Calu3 (cell line): ENCODE measurements at regions of chr1 and their contacts with region 1.

Region 1: GRCh38 chr1:162213281-162213912 is 143.9 kb downstream of the NOS1AP start:
- DNase-seq: peak; percentile 76
- H3K4me3 Mint-ChIP-seq: no peak overlapping the region
- H3K27ac Mint-ChIP-seq: no peak overlapping the region
- H3K4me1 Mint-ChIP-seq: peaks cover 52% of the 10 kb centered on the region
- H3K27me3 Mint-ChIP-seq: no peaks in the 10 kb centered on the region
- CTCF ChIP-seq: no peak

Region 2: DNA sequence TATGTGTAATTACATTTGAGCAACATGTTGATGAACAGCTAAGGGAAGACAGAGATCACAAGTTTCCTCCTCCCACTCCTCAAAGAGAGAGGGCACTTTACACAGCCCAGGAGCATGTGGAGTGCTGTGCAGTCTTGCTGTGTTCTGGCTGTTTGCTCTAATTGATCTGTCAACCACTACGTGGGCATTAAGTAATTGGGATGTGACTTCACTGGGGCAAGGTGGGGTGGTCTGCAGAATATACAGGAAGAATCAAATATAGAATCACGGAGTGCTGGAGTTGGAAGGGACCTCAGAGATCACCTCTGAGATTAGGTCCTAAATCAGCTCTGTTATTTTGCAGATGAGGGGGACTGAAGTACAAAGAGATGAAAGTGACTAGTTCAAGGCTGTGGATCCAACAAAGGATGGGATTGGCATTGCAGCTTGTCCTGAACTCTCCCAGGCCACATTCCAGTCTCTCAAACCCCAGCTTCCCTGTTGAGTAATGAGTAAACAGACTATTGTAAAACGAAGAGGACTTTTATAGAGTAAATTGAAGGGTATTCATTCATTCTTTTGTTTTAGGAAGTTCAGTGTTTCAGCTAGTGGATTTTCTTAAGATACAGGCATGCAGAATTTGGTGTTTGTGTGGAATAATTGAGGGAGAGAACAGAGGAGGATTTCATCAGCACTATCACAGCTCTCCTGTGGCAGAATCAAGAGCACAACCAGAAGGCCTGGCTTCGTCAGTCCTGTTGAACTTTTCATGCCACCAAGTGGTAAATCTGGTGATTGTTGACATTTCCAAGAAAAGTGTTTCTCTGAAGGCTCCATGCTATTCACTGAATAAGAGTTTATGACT is 121.5 kb before region 1 on chr1:
- CTCF ChIA-PET with region 1: no interaction called
- intact Hi-C with region 1: no loop called
- DNase-seq: no peak
- H3K4me3 Mint-ChIP-seq: no peak overlapping the region
- H3K27ac Mint-ChIP-seq: peak overlapping the region; percentile 14
- H3K4me1 Mint-ChIP-seq: peaks cover 44% of the 10 kb centered on the region
- H3K27me3 Mint-ChIP-seq: no peaks in the 10 kb centered on the region
- CTCF ChIP-seq: no peak

Region 3: DNA sequence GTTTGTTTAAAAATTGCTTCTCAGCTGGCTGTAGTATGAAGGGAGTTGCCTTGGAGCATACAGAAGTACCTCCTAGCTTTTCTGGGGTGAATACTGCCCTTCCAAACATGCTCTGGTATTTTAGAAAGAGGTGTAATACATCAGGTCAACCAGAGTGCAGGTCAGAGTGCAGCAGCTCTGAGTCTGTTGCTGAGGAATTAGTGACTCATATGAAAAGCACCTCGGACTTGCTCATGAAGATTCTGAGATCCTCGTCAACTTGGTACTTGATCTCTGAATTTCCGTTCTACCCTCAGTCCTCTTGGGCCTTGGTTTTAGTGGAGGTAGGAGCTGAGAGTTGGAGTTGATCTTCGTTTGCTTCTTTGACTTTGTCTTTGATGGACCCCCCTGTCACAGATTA is 76.6 kb before region 1 on chr1:
- CTCF ChIA-PET with region 1: interaction called, 5 read pairs
- intact Hi-C with region 1: loop called (anchors 5 kb)
- DNase-seq: peak; percentile 38
- H3K4me3 Mint-ChIP-seq: peak overlapping the region; percentile 3
- H3K27ac Mint-ChIP-seq: peak overlapping the region; percentile 8
- H3K4me1 Mint-ChIP-seq: peaks cover 69% of the 10 kb centered on the region
- H3K27me3 Mint-ChIP-seq: no peaks in the 10 kb centered on the region
- CTCF ChIP-seq: no peak

Region 4: DNA sequence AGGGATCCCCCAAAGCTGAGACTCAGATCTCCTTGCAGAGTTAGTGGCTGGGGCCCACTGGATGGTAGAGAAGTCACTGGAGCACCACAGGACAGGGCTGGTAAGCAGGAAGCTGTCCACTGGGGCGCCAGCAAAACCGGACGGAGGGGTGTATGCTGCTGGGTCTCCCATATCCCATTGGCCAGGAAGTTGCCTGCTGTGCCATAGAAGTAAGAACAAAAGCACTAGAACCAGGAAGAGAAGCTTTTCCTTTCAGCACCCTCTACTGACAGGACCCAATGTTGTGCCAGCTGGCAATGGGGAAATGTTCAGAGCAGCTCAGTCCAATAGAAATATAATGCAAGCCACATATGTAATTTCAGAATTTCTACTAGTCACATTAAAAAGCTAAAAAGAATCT is 16.7 kb after region 1 on chr1:
- CTCF ChIA-PET with region 1: interaction called, 22 read pairs
- intact Hi-C with region 1: no loop called
- DNase-seq: peak; percentile 61
- H3K4me3 Mint-ChIP-seq: no peak overlapping the region
- H3K27ac Mint-ChIP-seq: no peak overlapping the region
- H3K4me1 Mint-ChIP-seq: peaks cover 16% of the 10 kb centered on the region
- H3K27me3 Mint-ChIP-seq: no peaks in the 10 kb centered on the region
- CTCF ChIP-seq: no peak